Cardiac septum (tissue), 1 donor: ENCODE measurements at regions of chr2 and their contacts with region 1.

Region 1: DNA sequence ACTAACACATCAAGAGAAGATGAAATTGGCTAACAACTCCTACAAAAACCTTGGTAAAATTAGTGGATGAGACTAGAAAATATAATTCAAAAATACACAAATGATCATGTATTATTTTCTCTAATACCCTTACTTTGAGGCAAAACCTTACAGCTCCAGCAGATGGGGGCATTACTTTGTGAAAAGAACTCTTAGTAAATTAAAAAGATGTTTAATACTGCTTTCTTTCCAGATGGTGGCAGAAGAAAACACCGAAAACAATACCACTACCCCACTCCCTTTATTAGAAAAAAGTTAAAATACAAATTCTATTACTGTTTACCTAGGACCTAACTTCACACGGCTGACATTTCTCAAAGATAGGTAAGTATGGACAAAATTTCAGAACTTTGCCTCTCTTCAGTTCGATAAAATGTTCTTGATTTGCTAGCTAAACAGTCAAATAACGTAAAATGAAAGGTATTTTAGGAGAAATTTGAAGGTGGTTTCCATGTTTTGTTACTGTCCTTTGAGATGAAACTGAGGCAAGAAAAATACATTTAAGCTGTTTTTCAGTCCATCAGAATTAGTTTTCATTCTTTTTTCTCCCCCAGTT is 30.6 kb downstream of the ORC4 start:
- DNase-seq: no peak

Region 2: GRCh38 chr2:147888680-147889079 is 101.2 kb before region 1 on chr2:
- intact Hi-C with region 1: no loop called
- DNase-seq: no peak

Region 3: GRCh38 chr2:148130581-148130980 is 140.7 kb after region 1 on chr2:
- intact Hi-C with region 1: no loop called
- DNase-seq: no peak

Region 4: GRCh38 chr2:148509288-148509902 is 519.5 kb after region 1 on chr2:
- intact Hi-C with region 1: loop called (anchors 5 kb)
- DNase-seq: peak; percentile 89